ENCODE measurements at regions of chr5 and their contacts with region 1.

Region 1: DNA sequence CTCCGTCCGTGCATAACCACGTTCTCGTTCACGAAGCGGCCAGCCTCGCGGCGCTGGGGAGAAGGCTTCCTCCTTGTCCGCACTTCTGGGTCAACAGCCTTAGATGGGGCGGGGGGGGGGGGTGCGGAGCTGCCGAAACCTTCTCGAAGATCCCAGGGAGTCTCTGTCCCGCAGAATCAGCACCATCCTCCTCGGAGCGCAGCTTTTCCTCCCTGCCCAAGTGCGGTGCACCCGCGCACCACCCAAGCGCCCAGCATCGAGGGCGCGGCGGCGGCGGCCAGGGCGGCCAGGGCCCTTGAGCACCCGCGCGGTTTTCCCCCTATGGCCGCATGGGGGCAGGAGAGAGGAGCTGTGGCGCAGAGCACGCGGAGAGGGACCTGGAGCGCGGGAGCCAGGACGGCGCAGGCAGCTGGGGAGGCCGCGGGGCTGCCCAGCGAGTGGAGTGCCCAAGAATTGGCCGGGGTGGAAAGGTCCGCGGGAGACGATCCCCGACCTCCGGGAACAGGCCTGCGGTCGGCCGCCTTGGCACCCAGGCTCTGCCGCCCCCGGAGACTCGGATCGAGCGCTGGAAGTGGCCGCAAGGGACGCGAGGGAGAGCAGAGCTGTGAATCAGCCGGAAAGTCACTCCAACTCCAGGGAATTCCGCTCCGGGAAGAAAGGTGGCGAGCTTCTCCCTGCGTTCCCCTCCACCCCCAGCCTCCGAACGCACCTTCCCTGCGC is 43.1 kb downstream of the TMEM174 start:
- DNase-seq: peak; percentile 72 to 89
- H3K4me3 ChIP-seq: peak overlapping the region; percentile 33
- H3K4me1 ChIP-seq: peaks cover 12% of the 10 kb centered on the region
- H3K27me3 ChIP-seq: no peaks in the 10 kb centered on the region

Region 2: GRCh38 chr5:72938206-72938605 is 277.8 kb before region 1 on chr5:
- in situ Hi-C with region 1: loop called (anchors 25 kb)
- DNase-seq: no peak
- H3K4me3 ChIP-seq: no peak overlapping the region
- H3K4me1 ChIP-seq: no peaks in the 10 kb centered on the region
- H3K27me3 ChIP-seq: no peaks in the 10 kb centered on the region

Region 3: DNA sequence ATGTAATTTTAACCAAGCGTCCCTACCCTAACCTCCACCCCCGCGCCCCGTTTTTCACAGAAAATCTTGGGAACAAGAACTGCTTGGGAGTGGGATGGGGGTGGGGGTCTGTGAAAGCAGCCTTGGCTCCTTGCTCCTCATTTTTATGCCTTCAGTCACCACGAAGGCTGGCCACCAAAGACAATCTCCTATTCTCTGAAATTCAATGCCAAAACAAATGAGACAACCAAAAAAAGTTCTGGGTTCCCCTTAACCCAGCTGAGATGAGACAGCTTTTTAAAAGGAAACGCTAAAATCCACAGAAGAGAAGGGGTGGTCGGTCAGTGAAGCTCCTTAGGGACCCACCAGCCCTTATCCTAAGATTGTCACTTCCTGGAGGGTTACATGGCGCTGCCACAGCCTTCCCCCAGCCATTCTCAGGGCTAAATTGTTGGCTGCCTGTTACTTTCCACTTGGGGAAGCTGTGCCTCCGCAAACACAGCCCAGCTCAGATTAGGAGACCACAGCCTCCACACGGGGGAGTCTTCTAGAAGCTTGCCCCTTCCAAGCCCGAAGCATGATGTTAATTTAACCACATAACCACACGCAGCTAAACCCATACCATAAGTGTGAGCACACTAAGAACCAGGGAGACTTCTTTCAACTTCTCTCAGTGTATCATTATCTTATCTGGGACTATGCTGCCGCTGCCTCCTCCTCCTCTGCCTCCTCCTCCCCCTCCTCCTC is 96.3 kb after region 1 on chr5:
- in situ Hi-C with region 1: loop called (anchors 25 kb)
- DNase-seq: peak in 1 of 2 experiments; percentile 25
- H3K4me3 ChIP-seq: no peak overlapping the region
- H3K4me1 ChIP-seq: no peaks in the 10 kb centered on the region
- H3K27me3 ChIP-seq: 0 out of 2 replicates have a peak, but pooled peaks cover 3% of the 10 kb centered on the region

Region 4: DNA sequence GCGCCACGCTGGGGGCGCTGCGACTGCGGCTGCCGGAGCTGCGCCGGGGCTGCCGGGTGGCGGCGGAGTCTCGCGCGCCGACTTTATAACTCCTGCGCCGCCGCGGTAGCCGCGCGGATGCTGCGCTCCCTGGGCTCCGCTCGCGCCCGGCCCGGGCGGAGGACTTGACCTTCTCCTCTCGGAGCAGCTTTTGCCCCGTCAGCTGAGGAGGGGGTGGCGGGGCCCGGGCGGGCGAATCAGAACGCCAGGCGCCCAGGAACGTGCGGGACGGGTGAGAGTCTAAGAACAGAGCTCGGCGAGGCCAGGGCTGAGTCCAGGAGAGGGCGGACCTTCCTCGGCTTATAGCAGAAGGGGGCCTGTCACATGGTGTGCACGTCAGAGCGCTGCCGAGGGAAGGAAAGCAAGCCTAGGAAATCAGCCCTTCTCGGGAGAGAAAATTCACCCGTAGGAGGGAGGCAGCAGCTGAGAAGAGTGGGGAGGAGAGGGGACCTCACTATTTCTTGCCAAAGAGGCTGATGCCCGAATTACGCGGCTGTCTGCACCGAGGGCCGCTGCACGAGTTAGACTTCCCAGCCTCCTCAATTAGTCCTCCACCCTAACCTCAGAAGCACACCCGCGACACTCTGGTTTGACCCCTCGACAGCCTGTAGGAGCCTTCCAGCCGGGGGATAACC is 232.5 kb after region 1 on chr5 and contains the start of gene FOXD1:
- in situ Hi-C with region 1: loop called (anchors 10 kb)
- DNase-seq: peak; percentile 85 to 93
- H3K4me3 ChIP-seq: peak within 1 kb of the TSS; percentile 71
- H3K4me1 ChIP-seq: peaks cover 19% of the 10 kb centered on the region
- H3K27me3 ChIP-seq: no peaks in the 10 kb centered on the region

Measured in HAP-1 (cell line).